Activated T-helper 1 cell treated with anti-CD3 and anti-CD28 coated beads, Interleukin-12 subunit alpha, Interleukin-12 subunit beta, Interleukin-2, Interleukin-4 antibody, amounts not matched to agents 30 ng/mL and 10 ng/mL and 1 ng/mL, durations not matched to agents 14 hours and 24 hours and 36 hours (primary cell): ENCODE measurements at regions of chr3 and their contacts with region 1.

Region 1: GRCh38 chr3:71984843-71985613 is 200.1 kb upstream of the PROK2 start:
- DNase-seq: peak; percentile 21
- H3K4me3 Mint-ChIP-seq: peak overlapping the region; percentile 62
- H3K27ac Mint-ChIP-seq: peak overlapping the region; percentile 91
- H3K4me1 Mint-ChIP-seq: peaks cover 62% of the 10 kb centered on the region
- H3K27me3 Mint-ChIP-seq: no peaks in the 10 kb centered on the region

Region 2: DNA sequence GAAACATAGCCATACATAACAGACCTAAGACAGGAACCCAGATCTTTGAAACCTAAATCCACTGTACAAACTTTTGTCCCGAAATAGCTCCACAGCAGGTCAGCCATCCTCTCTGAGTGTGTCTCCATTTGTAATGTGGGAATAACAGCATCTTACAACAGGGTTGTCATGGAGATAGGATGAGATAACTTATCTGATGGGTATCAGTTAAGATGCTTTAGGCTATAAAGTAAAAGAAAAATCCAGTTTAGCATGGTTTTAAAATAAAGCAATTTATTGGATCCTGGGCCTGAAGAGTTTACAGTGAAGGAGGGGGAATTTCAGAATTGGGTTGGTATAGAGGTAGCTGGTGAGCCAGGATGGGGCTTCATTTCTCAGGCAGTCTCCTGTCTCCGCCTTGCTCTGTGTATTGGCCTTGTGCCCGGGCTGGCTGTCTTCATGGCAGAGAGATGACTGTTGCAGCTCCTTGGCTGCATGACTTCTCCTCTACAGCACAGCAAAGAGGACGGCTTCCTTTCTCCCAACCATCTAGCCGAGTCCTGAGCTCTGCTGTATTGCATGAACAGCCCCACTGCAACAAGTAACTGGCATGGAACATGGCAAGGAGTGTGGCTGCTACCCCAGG is 68.2 kb before region 1 on chr3:
- intact Hi-C with region 1: no loop called
- DNase-seq: no peak
- H3K4me3 Mint-ChIP-seq: no peak overlapping the region
- H3K27ac Mint-ChIP-seq: no peak overlapping the region
- H3K4me1 Mint-ChIP-seq: no peaks in the 10 kb centered on the region
- H3K27me3 Mint-ChIP-seq: peaks cover 2% of the 10 kb centered on the region

Region 3: GRCh38 chr3:71998995-71999673 is 14.1 kb after region 1 on chr3:
- intact Hi-C with region 1: loop called (anchors 1 kb)
- DNase-seq: no peak
- H3K4me3 Mint-ChIP-seq: no peak overlapping the region
- H3K27ac Mint-ChIP-seq: peak overlapping the region; percentile 63
- H3K4me1 Mint-ChIP-seq: peaks cover 44% of the 10 kb centered on the region
- H3K27me3 Mint-ChIP-seq: no peaks in the 10 kb centered on the region

Region 4: GRCh38 chr3:72060447-72061034 is 75.5 kb after region 1 on chr3:
- intact Hi-C with region 1: loop called (anchors 5 kb)
- DNase-seq: no peak
- H3K4me3 Mint-ChIP-seq: no peak overlapping the region
- H3K27ac Mint-ChIP-seq: peak overlapping the region; percentile 47
- H3K4me1 Mint-ChIP-seq: peaks cover 17% of the 10 kb centered on the region
- H3K27me3 Mint-ChIP-seq: no peaks in the 10 kb centered on the region

Region 5: GRCh38 chr3:72339116-72340030 is 354.3 kb after region 1 on chr3:
- intact Hi-C with region 1: loop called (anchors 1 kb)
- DNase-seq: no peak
- H3K4me3 Mint-ChIP-seq: no peak overlapping the region
- H3K27ac Mint-ChIP-seq: no peak overlapping the region
- H3K4me1 Mint-ChIP-seq: peaks cover 32% of the 10 kb centered on the region
- H3K27me3 Mint-ChIP-seq: peaks cover under 1% of the 10 kb centered on the region

Region 6: GRCh38 chr3:72538070-72538745 is 553.2 kb after region 1 on chr3:
- intact Hi-C with region 1: loop called (anchors 5 kb)
- DNase-seq: no peak
- H3K4me3 Mint-ChIP-seq: no peak overlapping the region
- H3K27ac Mint-ChIP-seq: peak overlapping the region; percentile 36
- H3K4me1 Mint-ChIP-seq: peaks cover 45% of the 10 kb centered on the region
- H3K27me3 Mint-ChIP-seq: peaks cover 3% of the 10 kb centered on the region